Tibial artery (tissue), 4 donors: ENCODE measurements at regions of chrX and their contacts with region 1.

Region 1: GRCh38 chrX:15143050-15143824 is 126.6 kb downstream of the ASB9 start:
- DNase-seq: peak in 1 of 2 donors; percentile 20
- H3K4me3 ChIP-seq: no peak overlapping the region
- H3K27ac ChIP-seq: no peak overlapping the region
- H3K4me1 ChIP-seq: no peaks in the 10 kb centered on the region
- H3K27me3 ChIP-seq: no peaks in the 10 kb centered on the region
- CTCF ChIP-seq: peak; percentile 42 to 51

Region 2: DNA sequence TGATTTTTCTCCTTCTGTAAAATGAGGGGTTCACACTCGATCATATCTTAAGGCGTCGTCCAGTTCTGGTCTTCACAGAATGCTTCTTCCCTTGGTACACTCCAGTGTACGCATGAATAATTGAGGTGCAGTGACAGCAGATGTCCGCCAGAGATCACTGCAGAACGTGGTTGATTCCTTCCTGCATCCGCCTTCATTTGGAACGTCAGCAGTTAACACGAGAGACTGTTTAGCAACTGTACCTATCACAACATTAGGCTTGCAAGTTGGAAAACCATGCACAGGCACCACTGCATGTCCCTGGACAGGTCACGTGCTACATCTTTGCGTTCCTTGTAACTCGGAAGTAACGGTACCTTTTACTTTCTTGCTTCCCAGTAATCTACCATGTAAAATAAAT is 1047.5 kb before region 1 on chrX:
- intact Hi-C with region 1: loop called (anchors 10 kb)
- DNase-seq: peak in 1 of 2 donors; percentile 20
- H3K4me3 ChIP-seq: no peak overlapping the region
- H3K27ac ChIP-seq: no peak overlapping the region
- H3K4me1 ChIP-seq: no peaks in the 10 kb centered on the region
- H3K27me3 ChIP-seq: no peaks in the 10 kb centered on the region
- CTCF ChIP-seq: peak; percentile 39 to 44